Mucosa of descending colon (tissue), 3 donors: ENCODE measurements at regions of chr16 and their contacts with region 1.

Region 1: DNA sequence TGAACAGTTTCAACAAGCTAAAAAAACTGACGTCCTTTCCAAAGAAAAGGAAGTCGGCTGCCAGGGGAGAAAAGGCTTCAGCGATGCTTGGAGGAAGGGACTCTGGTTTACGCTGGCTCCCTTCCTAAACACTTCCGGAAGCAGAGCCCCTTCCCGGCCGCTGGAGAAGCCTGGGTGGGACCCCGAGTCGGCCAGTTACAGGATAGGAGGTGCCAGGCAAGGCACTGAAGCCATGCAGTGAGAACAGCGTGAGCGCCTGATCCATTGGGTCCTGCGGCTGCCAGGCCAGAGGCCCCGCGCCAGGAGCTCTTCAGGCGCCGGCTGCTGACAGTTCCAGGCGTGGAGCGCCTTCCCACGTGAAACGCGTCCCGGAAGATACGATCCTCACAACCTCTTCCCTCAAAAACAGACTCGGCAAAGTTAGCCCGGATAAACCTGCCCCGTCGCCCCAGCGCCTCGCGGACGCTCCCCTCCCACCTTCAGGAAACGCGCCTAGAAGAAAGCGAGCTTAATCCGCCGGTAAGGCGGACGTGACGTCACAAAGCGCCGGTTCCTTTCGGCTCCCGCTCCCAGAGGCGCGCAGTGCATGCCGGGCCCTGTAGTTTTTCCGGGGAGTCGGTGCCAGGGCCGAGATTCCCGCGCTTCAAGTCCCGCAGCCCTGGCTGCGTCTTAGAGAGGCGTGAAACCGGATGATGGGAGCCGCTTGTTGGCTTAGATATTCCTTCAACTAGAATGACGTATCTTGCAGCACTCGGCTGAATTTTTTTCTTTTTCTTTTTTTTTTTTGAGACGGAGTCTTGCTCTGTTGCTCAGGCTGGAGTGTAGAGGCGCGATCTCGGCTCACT is at the start of gene ADAT1:
- DNase-seq: peak; percentile 98 to 100 (median 99)
- ATAC-seq: peak; percentile 95
- H3K4me3 ChIP-seq: peak within 1 kb of the TSS; percentile 59
- H3K4me1 ChIP-seq: peaks cover 21% of the 10 kb centered on the region
- CTCF ChIP-seq: no peak
- total RNA-seq, gene ADAT1: 33.0 to 38.1 (median 35.8) TPM

Region 2: GRCh38 chr16:75225092-75225491 is 397.9 kb before region 1 on chr16:
- intact Hi-C with region 1: no loop called
- DNase-seq: no peak
- ATAC-seq: peak; percentile 3
- H3K4me3 ChIP-seq: no peak overlapping the region
- H3K4me1 ChIP-seq: no peaks in the 10 kb centered on the region
- CTCF ChIP-seq: no peak

Region 3: GRCh38 chr16:75764154-75764768 is 141.3 kb after region 1 on chr16:
- intact Hi-C with region 1: loop called in 1 of 2 experiments (anchors 10 kb)
- DNase-seq: peak in 1 of 3 donors; percentile 79
- ATAC-seq: peak; percentile 92
- H3K4me3 ChIP-seq: no peak overlapping the region
- H3K4me1 ChIP-seq: no peaks in the 10 kb centered on the region
- CTCF ChIP-seq: peak; percentile 58